Right ventricle myocardium inferior (tissue), 1 donor: ENCODE measurements at regions of chr1 and their contacts with region 1.

Region 1: GRCh38 chr1:175023043-175023921 is at the start of gene MRPS14:
- DNase-seq: peak; percentile 98
- ATAC-seq: peak; percentile 99
- total RNA-seq, gene MRPS14: 29.2 TPM

Region 2: GRCh38 chr1:174999216-174999925 is 23.9 kb before region 1 on chr1:
- intact Hi-C with region 1: loop called (anchors 2 kb)
- DNase-seq: peak; percentile 98
- ATAC-seq: peak; percentile 95

Region 3: DNA sequence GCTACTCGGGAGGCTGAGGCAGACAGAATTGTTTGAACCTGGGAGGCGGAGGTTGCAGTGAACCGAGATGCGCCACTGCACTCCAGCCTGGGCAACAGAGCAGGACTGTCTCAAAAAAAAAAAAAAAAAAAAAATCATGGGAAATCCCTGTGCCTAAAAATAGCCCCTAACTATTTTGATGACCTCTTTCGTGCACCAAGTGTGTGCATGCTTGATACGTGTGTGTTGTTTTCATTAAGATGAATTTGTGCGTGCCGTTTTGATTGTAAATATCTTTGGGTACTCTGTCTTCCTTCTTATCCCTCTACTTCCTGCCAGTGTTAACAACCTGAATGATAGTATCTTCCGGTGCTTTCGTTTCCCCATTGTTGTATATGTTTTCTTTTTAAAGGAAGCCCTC is 13.8 kb before region 1 on chr1:
- intact Hi-C with region 1: no loop called
- DNase-seq: no peak
- ATAC-seq: no peak

Region 4: GRCh38 chr1:175322109-175322508 is 298.8 kb after region 1 on chr1:
- intact Hi-C with region 1: no loop called
- DNase-seq: no peak
- ATAC-seq: no peak